ENCODE measurements at regions of chr9 and their contacts with region 1.

Region 1: GRCh38 chr9:130940693-130941576 is 1.9 kb upstream of the FIBCD1 start:
- DNase-seq: peak in 1 of 2 donors; percentile 70
- H3K4me3 ChIP-seq: no peak overlapping the region
- H3K27ac ChIP-seq: no peak overlapping the region
- H3K4me1 ChIP-seq: peaks cover 5 to 25% of the 10 kb centered on the region in 2 donors
- H3K27me3 ChIP-seq: peaks cover 39% of the 10 kb centered on the region
- CTCF ChIP-seq: peak; percentile 79 to 86 (median 85)

Region 2: DNA sequence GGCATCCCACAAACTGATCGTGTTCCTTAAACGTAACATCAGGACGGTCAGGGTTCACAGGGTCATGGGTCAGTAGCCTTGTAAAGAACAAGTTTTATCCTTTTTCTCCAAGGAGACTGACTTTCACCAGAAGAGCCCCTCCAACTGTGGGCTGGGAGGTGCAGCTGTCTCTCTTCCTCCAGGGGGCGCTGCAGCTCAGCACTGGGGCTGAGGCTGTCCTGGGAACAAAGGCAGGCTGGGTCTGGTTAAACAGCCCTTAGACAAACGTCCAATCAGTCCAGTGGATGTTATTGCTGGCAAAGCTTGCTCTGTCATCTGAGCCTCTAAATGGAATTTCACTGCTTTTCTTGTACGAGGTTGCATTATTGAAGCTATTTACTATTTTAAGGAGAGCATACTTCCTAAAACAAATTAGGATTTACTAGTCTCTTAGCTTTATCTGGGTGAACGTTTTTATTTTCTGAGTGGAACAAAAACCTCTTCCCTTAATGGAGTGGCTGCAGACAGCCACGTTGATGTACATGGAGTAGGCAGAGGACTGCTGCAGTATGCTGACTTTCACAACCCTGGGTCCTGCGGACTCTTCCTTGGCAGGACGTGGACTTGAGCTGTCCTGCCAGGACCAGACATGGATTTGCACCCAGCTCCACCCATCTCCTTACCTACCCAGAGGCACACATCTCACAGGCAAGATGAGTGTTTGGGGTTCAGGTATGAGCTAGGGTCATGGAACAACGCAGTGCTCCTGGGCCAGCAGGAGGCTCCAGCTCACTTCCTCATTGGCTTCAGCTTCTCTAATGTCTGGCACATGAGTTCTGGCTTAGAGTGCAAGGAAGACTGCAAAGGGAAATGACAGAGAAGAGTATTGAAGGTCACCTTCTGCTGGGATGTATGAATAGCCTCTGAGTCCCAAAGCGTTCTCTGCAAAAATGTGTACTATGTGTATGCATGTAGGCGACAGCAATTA is 239.6 kb before region 1 on chr9:
- intact Hi-C with region 1: loop called (anchors 1 kb)
- DNase-seq: peak in 1 of 2 donors; percentile 86
- H3K4me3 ChIP-seq: no peak overlapping the region
- H3K27ac ChIP-seq: peak overlapping the region; percentile 3 to 20
- H3K4me1 ChIP-seq: peaks cover 0 to 12% of the 10 kb centered on the region in 2 donors
- H3K27me3 ChIP-seq: no peaks in the 10 kb centered on the region
- CTCF ChIP-seq: peak; percentile 87 to 96 (median 93)

Region 3: DNA sequence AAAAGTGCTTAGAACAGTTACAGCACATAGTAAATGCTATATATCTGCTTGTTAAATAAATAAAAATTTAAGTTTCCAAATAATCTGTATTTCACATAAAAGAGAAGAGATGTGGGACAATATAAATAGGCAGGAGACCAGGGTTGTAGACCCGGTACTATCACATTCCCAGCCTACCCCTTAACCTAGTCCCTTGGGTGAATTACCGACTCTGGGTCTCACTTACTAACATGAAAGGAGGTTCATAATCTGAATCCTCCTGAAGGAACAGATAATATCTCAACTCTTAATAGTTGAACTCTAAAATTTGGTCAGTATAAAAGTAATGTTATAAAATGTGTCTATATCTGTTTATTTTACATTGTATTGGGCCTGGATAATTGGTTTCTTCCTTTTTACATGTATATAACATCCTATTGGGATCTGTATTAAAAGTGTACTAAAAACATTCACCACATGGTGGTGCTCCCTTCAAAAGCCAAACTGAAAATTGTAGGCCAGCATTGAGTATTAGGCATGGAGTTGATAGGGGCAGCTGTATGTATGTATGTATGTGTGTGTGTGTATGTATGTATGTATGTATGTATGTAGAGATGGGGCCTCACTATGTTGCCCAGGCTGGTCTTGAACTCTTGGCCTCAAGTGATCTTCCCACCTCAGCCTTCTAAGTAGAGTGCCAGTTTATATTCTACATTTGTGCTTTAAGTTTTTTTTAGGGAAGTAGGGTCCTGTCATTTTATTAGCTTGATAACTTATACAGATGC is 170.1 kb before region 1 on chr9:
- intact Hi-C with region 1: loop called (anchors 5 kb)
- DNase-seq: no peak
- H3K4me3 ChIP-seq: no peak overlapping the region
- H3K27ac ChIP-seq: no peak overlapping the region
- H3K4me1 ChIP-seq: peaks cover 0 to 4% of the 10 kb centered on the region in 2 donors
- H3K27me3 ChIP-seq: no peaks in the 10 kb centered on the region
- CTCF ChIP-seq: peak; percentile 49 to 79 (median 71)

Region 4: DNA sequence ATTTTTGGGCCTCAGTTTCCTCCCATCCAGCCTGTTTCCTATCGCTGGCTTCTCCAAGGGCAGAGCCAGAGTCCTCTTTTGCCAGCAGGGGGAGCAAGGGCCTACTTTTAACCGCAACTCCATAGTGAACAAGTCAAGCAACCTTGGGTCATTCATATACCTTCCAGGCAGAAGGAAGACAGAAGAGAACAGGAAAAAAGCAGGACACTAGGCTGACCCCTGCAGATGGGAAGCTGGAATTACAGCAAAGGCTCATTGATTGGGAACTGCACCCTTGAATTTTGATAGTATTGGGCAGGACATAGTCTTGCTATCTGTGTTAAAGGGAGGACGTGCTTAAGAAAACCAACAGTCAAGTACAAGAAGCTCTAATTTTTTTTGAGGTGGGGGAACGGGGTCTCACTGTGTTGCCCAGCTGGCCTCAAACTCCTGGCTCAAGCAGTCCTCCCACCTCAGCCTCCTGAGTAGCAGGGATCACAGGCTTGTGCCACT is 74.4 kb before region 1 on chr9:
- intact Hi-C with region 1: loop called (anchors 2 kb)
- DNase-seq: peak in 1 of 2 donors; percentile 78
- H3K4me3 ChIP-seq: no peak overlapping the region
- H3K27ac ChIP-seq: no peak overlapping the region
- H3K4me1 ChIP-seq: peaks cover 0 to 29% of the 10 kb centered on the region in 2 donors
- H3K27me3 ChIP-seq: no peaks in the 10 kb centered on the region
- CTCF ChIP-seq: peak; percentile 52 to 75 (median 74)